ENCODE measurements at regions of chr19 and their contacts with region 1.

Region 1: DNA sequence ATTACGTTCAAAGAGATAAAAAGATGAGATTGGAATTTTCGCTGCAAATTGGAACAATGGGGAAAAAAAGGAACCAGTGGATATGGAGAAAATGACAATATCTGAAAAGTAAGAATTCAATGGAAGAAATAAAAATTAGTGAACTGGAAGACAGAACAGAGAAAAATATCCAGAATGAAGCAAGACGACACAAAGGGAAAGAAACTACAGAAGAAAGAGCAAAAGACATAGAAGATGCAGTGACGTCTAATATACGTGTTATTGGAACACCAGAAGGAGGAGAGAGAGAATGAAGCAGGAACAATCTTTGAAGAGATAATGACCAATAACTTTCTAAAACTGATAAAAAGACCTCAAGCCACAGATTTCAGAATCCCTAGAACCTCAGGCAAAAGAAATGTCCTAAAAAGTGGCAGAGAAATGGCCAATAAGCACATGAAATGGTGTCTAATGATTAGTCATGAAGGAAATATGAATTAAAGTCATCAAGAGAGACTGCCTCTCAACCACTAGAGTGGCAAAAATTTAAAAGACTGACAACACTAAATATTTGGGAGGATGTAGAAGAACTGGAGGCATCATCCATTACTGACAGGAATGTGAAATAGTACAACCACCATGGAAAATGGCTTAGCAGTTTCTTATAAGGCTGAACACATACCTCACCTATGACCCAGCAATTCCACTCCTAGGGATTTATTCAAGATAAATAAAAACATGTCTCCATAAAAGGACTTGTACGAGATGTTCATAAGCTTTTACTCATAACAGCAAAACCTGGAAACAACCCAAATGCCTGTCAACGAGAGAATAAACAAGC is 56.5 kb downstream of the GADD45B start:
- DNase-seq: no peak
- ATAC-seq: no peak
- H3K4me3 Mint-ChIP-seq: no peak overlapping the region
- H3K27ac Mint-ChIP-seq: no peak overlapping the region
- H3K4me1 Mint-ChIP-seq: peaks cover 26% of the 10 kb centered on the region
- H3K27me3 Mint-ChIP-seq: no peaks in the 10 kb centered on the region
- CTCF ChIP-seq: no peak

Region 2: DNA sequence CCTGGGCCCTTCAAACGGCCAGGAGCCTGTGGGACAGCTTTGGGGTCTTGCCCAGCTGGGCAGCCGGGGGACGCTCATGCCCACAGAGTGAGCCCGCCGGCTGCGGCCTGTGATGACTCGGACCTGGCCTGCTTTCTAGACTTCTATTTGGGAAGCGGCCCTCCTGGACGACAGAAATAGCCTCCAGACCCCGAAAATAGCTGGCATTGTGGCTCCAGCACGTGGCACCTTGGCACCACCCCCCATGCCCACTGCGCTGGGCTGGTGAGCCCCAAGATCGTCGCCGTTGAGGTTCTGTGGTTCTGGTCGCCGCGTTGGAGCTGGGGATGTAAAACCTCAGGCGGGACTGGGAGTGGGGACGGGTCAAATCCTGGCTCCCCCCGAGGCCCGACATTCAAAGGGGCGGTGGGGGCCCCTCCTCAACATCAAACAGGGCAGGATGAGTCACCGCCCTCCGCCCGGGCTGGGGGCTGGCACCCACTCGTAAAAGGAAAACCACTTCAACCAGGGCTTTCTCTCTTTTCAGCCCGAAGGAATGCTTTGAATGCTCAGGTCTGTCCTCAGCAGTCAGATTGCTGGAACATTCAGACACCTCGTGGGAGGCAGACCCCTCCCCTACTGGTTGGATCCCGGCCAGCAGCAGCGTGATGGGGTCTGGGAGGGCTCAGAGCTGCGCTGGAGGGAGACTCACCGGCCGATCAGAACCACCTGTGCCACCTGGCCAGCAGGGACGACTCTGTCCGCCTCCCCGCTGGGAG is 14.4 kb before region 1 on chr19:
- CTCF ChIA-PET with region 1: no interaction called
- POLR2A ChIA-PET with region 1: no interaction called
- intact Hi-C with region 1: no loop called
- DNase-seq: peak; percentile 33
- ATAC-seq: peak; percentile 42
- H3K4me3 Mint-ChIP-seq: no peak overlapping the region
- H3K27ac Mint-ChIP-seq: no peak overlapping the region
- H3K4me1 Mint-ChIP-seq: peaks cover 8% of the 10 kb centered on the region
- H3K27me3 Mint-ChIP-seq: no peaks in the 10 kb centered on the region
- CTCF ChIP-seq: no peak

Region 3: DNA sequence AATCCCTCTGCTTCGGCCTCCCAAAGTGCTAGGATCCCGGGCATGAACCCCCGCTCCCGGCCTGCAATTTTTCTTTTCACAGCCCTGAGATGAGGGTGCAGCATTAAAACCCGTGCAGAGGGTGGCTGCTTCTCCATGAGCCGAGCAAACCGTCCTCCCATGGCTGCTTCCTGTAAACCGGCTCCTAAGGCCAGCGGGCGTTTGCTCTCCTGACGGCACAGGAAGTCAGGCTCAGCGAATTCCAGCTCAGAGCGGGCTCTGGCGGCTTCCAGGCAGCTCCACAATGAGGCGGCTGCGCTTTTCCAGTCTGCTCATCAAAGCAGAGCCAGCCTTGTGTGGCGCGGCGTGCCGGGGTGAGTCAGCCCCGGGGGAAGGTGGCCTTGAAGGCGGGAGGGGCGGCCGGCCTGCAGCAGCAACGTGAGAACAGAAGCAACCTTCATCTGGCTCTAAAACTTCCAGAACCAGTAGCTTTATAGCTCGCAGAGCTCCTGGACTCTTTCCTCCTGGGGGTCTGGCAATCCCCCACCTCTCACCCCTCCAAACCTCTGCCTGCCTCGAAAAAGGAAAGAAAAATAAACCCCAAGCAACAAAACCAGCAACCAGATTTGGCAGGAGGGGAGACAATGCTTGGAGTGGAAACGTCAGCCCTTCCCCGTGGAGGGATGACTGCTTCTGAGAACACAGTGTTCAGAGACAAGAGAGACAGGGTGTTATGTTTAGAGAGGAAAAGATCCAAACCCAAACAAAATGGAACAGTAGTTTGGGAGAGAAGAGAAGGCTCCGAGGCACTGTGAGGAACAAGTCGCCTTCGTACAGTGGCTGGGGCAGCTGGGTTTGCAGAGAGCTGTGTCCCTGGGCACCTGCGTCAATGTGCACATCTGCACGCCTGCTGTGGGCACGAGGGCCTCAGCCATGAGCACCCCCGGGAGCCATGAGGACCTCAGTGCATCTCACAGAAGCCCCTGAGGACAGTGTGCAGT is 11.3 kb after region 1 on chr19:
- CTCF ChIA-PET with region 1: interaction called, 4 read pairs
- POLR2A ChIA-PET with region 1: interaction called, 10 read pairs
- intact Hi-C with region 1: no loop called
- DNase-seq: peak; percentile 86
- ATAC-seq: peak; percentile 94
- H3K4me3 Mint-ChIP-seq: peak overlapping the region; percentile 58
- H3K27ac Mint-ChIP-seq: peak overlapping the region; percentile 79
- H3K4me1 Mint-ChIP-seq: peaks cover 19% of the 10 kb centered on the region
- H3K27me3 Mint-ChIP-seq: no peaks in the 10 kb centered on the region
- CTCF ChIP-seq: no peak